Ascending aorta (tissue), 2 donors: ENCODE measurements at regions of chr3 and their contacts with region 1.

Region 1: GRCh38 chr3:141360888-141361598 is 7.3 kb upstream of the ZBTB38 start:
- DNase-seq: peak in 1 of 2 donors; percentile 75
- H3K4me3 ChIP-seq: peak overlapping the region; percentile 29 to 32
- H3K27ac ChIP-seq: peak overlapping the region; percentile 67 to 77
- H3K4me1 ChIP-seq: peaks cover 0 to 11% of the 10 kb centered on the region in 2 donors
- H3K27me3 ChIP-seq: no peaks in the 10 kb centered on the region
- CTCF ChIP-seq: peak; percentile 73 to 91 (median 84)

Region 2: DNA sequence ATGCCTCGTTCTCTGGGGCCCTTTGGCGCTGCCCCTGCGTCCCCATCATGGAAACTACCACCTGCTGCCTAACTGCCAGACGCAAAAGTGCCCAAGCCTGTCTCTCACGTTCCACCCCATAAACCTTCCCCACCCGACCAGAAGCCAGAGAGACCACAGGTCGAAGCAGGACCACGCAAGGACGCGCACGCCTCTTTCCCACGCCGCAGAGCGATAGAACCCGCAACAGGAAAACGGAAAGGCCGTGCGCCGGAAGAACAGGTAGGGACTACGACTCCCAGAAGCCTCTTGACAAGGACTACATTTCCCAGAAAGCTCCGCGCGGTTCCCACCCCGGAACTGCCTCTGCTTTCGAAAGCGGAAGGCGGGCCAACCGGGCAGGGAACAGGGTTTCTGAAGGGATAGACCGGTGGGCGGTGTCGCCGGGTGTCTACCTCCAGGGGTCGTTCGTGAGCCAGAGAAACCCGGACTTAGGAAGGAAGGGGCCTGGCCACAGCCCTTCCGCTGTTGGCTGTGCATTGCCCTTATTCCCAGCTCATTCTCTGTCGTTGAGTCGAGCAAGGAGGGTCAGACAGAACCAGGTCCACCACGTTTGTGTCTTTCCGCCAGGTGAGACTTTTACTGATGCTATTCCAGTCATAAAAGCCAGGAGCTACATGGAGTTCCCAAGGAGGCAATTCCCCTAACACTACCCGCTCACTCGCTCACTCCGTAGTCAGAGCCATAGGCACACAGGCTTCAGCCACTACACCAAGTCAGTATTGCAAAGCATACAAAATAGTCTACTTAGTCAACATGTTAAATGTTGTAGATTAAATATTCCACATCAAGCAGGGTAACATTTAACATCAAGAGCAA is 49.3 kb before region 1 on chr3:
- intact Hi-C with region 1: loop called (anchors 2 kb)
- DNase-seq: peak; percentile 95 to 99
- H3K4me3 ChIP-seq: peak overlapping the region; percentile 59 to 89
- H3K27ac ChIP-seq: peak overlapping the region; percentile 63 to 82
- H3K4me1 ChIP-seq: peaks cover 0 to 8% of the 10 kb centered on the region in 2 donors
- H3K27me3 ChIP-seq: no peaks in the 10 kb centered on the region
- CTCF ChIP-seq: peak; percentile 72 to 85 (median 76)

Region 3: DNA sequence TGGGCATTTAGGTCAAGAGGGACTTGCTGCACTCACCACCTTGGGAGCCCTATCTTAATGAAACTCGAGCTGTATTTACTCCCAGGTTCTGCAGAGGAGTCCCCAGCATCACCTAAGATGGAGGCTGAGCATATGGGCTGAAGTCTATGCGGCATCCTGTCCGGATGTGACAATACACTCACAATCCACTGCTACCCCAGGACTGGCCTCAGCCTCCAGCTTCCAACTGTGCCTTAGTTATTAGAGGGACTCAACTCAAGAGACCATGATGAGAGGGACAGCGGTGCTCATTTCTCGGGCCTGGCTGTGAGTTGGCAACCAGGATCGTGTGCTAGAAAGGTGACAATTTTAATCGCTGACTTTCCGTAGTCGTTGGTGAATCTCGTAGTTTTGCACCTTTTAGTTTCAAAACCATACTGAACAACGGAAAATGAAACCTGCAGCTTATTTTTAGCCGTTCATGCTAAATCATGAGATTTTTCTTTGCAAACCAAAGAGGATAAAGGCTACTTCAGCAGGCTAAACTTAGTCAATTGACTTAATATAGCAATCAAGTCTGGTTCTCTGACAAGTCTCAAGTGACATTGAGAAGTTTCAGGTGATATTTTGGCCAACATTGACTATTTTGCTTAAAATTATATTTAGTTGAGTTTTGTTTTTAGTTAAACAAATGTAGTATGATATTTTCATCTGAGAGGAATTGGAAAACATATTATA is 18.4 kb after region 1 on chr3:
- intact Hi-C with region 1: no loop called
- DNase-seq: no peak
- H3K4me3 ChIP-seq: no peak overlapping the region
- H3K27ac ChIP-seq: no peak overlapping the region
- H3K4me1 ChIP-seq: peaks cover 2 to 6% of the 10 kb centered on the region in 2 donors
- H3K27me3 ChIP-seq: no peaks in the 10 kb centered on the region
- CTCF ChIP-seq: no peak

Region 4: GRCh38 chr3:141412087-141412935 is 51.3 kb after region 1 on chr3:
- intact Hi-C with region 1: loop called (anchors 2 kb)
- DNase-seq: peak in 1 of 2 donors; percentile 84
- H3K4me3 ChIP-seq: peak overlapping the region; percentile 43 to 54
- H3K27ac ChIP-seq: peak overlapping the region; percentile 92 to 99
- H3K4me1 ChIP-seq: peaks cover 12 to 72% of the 10 kb centered on the region in 2 donors
- H3K27me3 ChIP-seq: no peaks in the 10 kb centered on the region
- CTCF ChIP-seq: no peak

Region 5: GRCh38 chr3:141441381-141442364 is 80.6 kb after region 1 on chr3:
- intact Hi-C with region 1: no loop called
- DNase-seq: no peak
- H3K4me3 ChIP-seq: peak overlapping the region in 1 of 2 donors; percentile 38
- H3K27ac ChIP-seq: peak overlapping the region; percentile 72 to 80
- H3K4me1 ChIP-seq: peaks cover 0 to 22% of the 10 kb centered on the region in 2 donors
- H3K27me3 ChIP-seq: no peaks in the 10 kb centered on the region
- CTCF ChIP-seq: peak; percentile 37 to 52 (median 51)

Region 6: GRCh38 chr3:141452036-141452435 is 91.0 kb after region 1 on chr3:
- intact Hi-C with region 1: loop called (anchors 1 kb)
- DNase-seq: no peak
- H3K4me3 ChIP-seq: no peak overlapping the region
- H3K27ac ChIP-seq: peak overlapping the region; percentile 20 to 27
- H3K4me1 ChIP-seq: peaks cover 0 to 26% of the 10 kb centered on the region in 2 donors
- H3K27me3 ChIP-seq: no peaks in the 10 kb centered on the region
- CTCF ChIP-seq: peak; percentile 66 to 86 (median 73)

Region 7: DNA sequence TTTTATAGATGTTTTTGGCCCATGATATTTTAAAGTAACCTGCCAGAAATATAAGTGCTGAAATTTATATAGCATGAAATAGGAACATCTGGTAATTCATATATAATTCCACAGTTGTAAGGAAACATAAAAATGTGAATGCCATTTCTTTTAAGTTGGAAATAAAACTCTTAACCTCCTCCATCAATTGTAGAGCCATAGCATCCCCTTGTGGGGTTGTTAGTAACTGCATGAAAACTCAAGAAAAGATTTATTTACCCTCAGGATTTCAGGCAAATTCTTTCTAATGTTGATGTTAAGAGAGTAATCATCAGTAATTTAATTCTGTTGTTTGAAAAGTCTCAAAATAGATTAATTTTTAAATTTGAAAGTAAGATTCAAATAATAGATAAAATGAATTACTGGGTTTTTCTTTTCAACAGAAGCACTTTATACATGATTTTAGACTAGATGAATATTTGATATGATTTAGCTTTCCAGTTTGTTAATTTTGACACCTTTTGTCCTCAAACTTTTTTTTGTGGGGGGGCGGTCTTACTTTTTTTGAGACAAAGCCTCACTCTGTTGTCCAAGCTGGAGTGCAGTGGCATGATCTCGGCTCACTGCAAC is 200.5 kb after region 1 on chr3:
- intact Hi-C with region 1: loop called (anchors 5 kb)
- DNase-seq: no peak
- H3K4me3 ChIP-seq: no peak overlapping the region
- H3K27ac ChIP-seq: no peak overlapping the region
- H3K4me1 ChIP-seq: no peaks in the 10 kb centered on the region
- H3K27me3 ChIP-seq: no peaks in the 10 kb centered on the region
- CTCF ChIP-seq: peak; percentile 91 to 94 (median 94)

Region 8: GRCh38 chr3:141710573-141711251 is 349.7 kb after region 1 on chr3:
- intact Hi-C with region 1: loop called (anchors 1 kb)
- DNase-seq: peak; percentile 30 to 83
- H3K4me3 ChIP-seq: no peak overlapping the region
- H3K27ac ChIP-seq: peak overlapping the region; percentile 82 to 89
- H3K4me1 ChIP-seq: peaks cover 8 to 19% of the 10 kb centered on the region in 2 donors
- H3K27me3 ChIP-seq: no peaks in the 10 kb centered on the region
- CTCF ChIP-seq: no peak